Activated T-helper 2 cell treated with anti-CD3 and anti-CD28 coated beads, Interferon-gamma antibody, Interleukin-2, Interleukin-4, amounts not matched to agents 10 μg/mL and 5 μg/mL and 100 μg/mL, durations not matched to agents 14 hours and 24 hours and 36 hours (primary cell): ENCODE measurements at regions of chr10 and their contacts with region 1.

Region 1: GRCh38 chr10:74855027-74855426 is 28.6 kb downstream of the KAT6B start:
- DNase-seq: no peak
- H3K4me3 Mint-ChIP-seq: peak overlapping the region; percentile 3
- H3K27ac Mint-ChIP-seq: peak overlapping the region; percentile 65
- H3K4me1 Mint-ChIP-seq: peaks cover 25% of the 10 kb centered on the region
- H3K27me3 Mint-ChIP-seq: no peaks in the 10 kb centered on the region

Region 2: DNA sequence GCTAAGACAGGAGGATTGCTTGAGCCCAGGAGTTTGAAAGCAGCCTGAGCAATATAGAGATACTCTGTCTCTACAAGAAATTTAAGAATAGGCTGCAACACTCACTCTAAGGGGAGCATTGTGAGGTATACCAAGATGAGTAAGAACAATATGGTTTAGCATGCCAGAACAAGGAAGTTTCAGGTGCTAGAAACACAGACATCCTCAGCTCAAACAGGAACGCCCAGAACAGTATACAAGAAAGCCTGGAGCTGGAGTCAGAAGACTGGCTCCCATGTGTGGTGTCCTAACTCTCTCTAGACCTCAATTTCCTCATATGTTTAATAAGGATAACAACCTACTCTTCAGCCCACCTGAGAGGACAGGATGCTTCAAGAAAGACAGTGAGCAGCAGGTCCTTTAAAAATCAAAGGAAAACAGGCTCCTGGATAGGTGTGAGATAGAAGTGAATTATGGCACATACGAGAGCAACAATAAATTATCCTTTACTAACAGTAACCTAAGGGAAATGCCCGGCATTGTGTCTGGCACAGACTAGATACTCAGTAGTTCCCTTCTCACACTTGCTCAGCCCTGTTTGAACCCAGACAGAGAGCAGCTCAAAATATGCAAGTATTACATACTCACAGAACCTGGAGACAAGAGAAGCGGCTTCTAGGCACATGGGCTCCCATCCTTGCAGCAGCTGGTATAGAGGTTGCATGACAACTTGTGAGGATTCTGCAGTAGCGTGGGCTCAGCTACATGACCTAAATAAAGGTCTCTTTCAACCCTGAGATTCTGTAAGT is 16.8 kb after region 1 on chr10:
- intact Hi-C with region 1: loop called (anchors 1 kb)
- DNase-seq: no peak
- H3K4me3 Mint-ChIP-seq: peak overlapping the region; percentile 35
- H3K27ac Mint-ChIP-seq: peak overlapping the region; percentile 59
- H3K4me1 Mint-ChIP-seq: peaks cover 36% of the 10 kb centered on the region
- H3K27me3 Mint-ChIP-seq: no peaks in the 10 kb centered on the region

Region 3: GRCh38 chr10:74977913-74978847 is 123.2 kb after region 1 on chr10:
- intact Hi-C with region 1: loop called (anchors 10 kb)
- DNase-seq: peak; percentile 60
- H3K4me3 Mint-ChIP-seq: peak overlapping the region; percentile 37
- H3K27ac Mint-ChIP-seq: peak overlapping the region; percentile 74
- H3K4me1 Mint-ChIP-seq: peaks cover 49% of the 10 kb centered on the region
- H3K27me3 Mint-ChIP-seq: no peaks in the 10 kb centered on the region